ENCODE measurements at regions of chr10 and their contacts with region 1.

Region 1: DNA sequence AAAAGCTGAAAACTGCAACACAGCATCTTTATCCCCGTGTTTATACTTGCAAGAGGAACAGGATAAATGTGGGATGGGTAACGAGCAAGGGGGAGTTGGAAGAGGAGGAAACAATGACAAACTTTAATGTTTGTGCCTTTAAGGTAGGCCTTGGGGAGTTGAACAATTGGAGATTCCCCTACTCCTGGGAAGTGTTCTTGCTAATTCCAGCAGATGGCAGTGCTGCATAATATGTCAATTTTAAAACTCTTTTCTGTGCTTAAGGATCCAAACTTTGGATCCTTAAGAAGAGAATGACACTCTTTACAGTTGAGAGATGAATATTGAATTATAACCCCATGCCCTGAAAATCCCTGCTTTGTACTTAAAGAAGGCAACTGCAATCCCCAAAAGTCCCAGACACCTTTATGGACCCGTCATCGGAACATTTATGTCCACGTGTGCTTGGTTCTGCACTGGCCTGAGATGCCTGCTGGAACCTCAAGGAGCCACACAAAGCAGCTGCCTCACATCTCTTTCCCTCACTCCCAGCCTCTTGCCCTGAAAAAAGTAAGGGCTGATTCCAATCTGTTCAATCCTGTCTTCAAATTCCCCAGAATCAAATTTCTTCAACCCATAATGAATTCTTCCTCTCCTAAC is 12.0 kb downstream of the IFIT5 start:
- DNase-seq: no peak

Region 2: DNA sequence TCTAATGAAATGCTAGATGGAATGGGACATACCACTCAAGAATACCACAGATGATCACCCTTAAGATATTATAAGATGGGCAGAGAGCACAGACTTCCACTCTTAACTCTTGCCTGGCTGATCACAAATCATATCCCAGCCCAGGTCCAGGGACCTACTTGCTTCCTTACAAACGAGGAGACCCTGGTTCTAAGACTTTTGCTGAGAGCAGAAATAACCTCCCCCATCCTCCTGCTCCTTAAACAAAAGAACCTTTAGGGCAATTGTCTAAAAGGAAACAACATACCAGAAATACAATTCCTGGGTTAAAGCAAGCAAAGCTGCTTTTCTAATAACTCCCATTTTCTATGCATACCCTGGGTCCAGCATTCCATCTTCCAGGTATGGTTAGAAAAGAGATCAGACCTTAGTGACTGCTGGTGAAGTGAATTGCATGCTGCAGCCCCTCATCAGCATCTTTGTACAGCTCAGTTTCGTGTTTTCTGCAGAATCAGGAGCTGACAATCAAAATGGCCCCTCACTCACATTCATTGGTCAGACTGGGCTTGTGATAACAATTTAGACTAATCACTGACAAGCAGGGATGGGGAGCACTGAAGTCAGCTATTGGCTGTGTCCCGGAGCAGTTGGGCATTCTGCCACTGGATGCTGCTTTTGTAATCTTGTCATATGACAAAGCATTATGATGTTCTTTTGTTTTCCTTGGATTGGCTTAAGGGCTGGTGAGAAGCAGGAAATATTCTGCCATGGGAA is 84.0 kb before region 1 on chr10:
- intact Hi-C with region 1: no loop called
- DNase-seq: no peak

Region 3: GRCh38 chr10:89458291-89458690 is 31.9 kb after region 1 on chr10:
- intact Hi-C with region 1: no loop called
- DNase-seq: no peak

Region 4: GRCh38 chr10:89563861-89564478 is 137.6 kb after region 1 on chr10:
- intact Hi-C with region 1: loop called (anchors 2 kb)
- DNase-seq: no peak